ENCODE measurements at regions of chr9 and their contacts with region 1.

Region 1: GRCh38 chr9:110183208-110184145 is 24.5 kb downstream of the C9orf152 start:
- DNase-seq: peak; percentile 60 to 65
- H3K4me3 ChIP-seq: no peak overlapping the region
- H3K27ac ChIP-seq: no peak overlapping the region
- H3K4me1 ChIP-seq: peaks cover 26% of the 10 kb centered on the region
- H3K27me3 ChIP-seq: no peaks in the 10 kb centered on the region
- CTCF ChIP-seq: peak; percentile 87

Region 2: DNA sequence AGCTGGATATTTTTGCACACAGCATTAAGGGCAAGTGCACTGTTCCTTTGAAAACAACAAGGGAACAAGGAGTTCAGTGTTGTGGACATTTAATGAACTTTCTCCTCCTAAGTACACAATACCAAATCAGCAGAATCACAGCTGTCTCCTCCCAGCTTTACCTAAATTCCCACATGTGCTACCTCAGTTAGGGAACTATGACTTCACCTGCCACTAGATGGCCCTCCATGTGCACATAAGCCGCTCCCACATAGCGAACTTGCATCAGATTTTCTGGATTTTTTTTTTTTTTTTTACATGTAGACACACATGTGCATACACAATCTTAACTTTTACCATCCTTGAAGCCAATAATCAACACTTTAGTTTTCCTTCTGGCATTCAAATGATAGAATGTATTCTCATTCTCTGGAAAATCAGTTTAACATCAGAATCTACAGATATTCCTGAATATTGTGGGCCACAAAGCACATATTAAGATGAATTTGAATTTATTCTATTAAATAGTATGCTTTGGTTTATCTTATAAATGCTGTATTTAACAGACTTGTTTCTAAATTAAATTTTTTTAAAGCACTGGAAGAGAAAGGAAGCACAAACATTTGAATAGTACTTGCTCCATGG is 279.9 kb before region 1 on chr9:
- CTCF ChIA-PET with region 1: interaction called, 5 read pairs
- POLR2A ChIA-PET with region 1: no interaction called
- intact Hi-C with region 1: loop called (anchors 1 kb)
- DNase-seq: peak; percentile 68 to 70
- H3K4me3 ChIP-seq: no peak overlapping the region
- H3K27ac ChIP-seq: no peak overlapping the region
- H3K4me1 ChIP-seq: 0 out of 2 replicates have a peak, but pooled peaks cover 3% of the 10 kb centered on the region
- H3K27me3 ChIP-seq: no peaks in the 10 kb centered on the region
- CTCF ChIP-seq: peak; percentile 91

Region 3: DNA sequence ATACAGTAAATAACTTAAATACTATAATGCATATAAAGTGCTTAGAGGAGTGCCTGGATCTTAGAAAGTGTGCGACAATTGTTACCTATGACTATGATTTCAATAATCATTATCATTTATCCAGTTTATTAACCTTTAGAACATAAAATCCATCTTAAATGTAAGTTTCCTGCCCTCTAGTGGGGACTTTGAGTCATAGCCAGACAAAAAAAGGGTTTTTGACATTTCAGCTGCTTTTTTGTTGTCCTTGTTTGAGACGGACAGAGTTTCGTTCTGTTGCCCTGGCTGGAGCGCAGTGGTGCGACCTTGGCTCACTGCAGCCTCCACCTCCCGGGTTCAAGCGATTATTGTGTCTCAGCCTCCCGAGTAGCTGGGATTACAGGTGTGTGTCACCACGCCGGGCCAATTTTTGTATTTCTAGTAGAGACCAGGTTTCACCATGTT is 34.2 kb after region 1 on chr9:
- CTCF ChIA-PET with region 1: interaction called, 12 read pairs
- POLR2A ChIA-PET with region 1: no interaction called
- intact Hi-C with region 1: loop called (anchors 1 kb)
- DNase-seq: peak in 1 of 2 experiments; percentile 10
- H3K4me3 ChIP-seq: peak overlapping the region; percentile 33; the same call in 1 of the 2 replicates
- H3K27ac ChIP-seq: no peak overlapping the region
- H3K4me1 ChIP-seq: no peaks in the 10 kb centered on the region
- H3K27me3 ChIP-seq: no peaks in the 10 kb centered on the region
- CTCF ChIP-seq: peak; percentile 89

Region 4: DNA sequence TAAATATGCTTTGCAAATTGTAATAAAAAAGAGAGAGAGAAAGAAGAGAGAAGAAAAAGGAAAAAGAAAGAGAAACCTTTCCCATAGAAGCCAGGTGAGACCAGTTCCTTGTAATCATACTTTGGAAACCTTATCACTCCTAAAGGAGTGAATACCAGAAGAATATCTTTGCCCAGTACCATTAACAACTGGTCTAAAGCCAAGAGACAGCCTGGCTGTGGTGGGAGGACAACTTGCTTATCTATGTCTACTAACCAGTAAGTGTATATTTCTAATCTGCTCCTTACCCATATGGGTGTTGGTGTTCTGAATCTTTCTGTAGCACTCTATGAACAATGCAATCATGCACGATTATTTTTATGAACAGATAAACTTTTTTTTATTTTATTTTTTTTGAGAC is 83.3 kb after region 1 on chr9:
- CTCF ChIA-PET with region 1: no interaction called
- POLR2A ChIA-PET with region 1: no interaction called
- intact Hi-C with region 1: no loop called
- DNase-seq: no peak
- H3K4me3 ChIP-seq: no peak overlapping the region
- H3K27ac ChIP-seq: no peak overlapping the region
- H3K4me1 ChIP-seq: no peaks in the 10 kb centered on the region
- H3K27me3 ChIP-seq: no peaks in the 10 kb centered on the region
- CTCF ChIP-seq: no peak

Region 5: GRCh38 chr9:110427497-110428104 is 244.1 kb after region 1 on chr9:
- CTCF ChIA-PET with region 1: no interaction called
- POLR2A ChIA-PET with region 1: no interaction called
- intact Hi-C with region 1: loop called (anchors 2 kb)
- DNase-seq: peak in 1 of 2 experiments; percentile 43
- H3K4me3 ChIP-seq: no peak overlapping the region
- H3K27ac ChIP-seq: no peak overlapping the region
- H3K4me1 ChIP-seq: no peaks in the 10 kb centered on the region
- H3K27me3 ChIP-seq: no peaks in the 10 kb centered on the region
- CTCF ChIP-seq: peak; percentile 56

Region 6: GRCh38 chr9:111399772-111400563 is 1216.5 kb after region 1 on chr9:
- CTCF ChIA-PET with region 1: no interaction called
- POLR2A ChIA-PET with region 1: no interaction called
- intact Hi-C with region 1: loop called (anchors 5 kb)
- DNase-seq: peak; percentile 20 to 52
- H3K4me3 ChIP-seq: no peak overlapping the region
- H3K27ac ChIP-seq: no peak overlapping the region
- H3K4me1 ChIP-seq: no peaks in the 10 kb centered on the region
- H3K27me3 ChIP-seq: no peaks in the 10 kb centered on the region
- CTCF ChIP-seq: peak; percentile 69